PC-3 (cell line): ENCODE measurements at regions of chr3 and their contacts with region 1.

Region 1: GRCh38 chr3:54120657-54121413 is 1.5 kb upstream of the CACNA2D3 start:
- DNase-seq: no peak
- ATAC-seq: no peak
- H3K4me3 ChIP-seq: no peak overlapping the region
- H3K27ac ChIP-seq: no peak overlapping the region
- H3K4me1 ChIP-seq: no peaks in the 10 kb centered on the region
- H3K27me3 ChIP-seq: peaks cover 61% of the 10 kb centered on the region
- CTCF ChIP-seq: no peak

Region 2: DNA sequence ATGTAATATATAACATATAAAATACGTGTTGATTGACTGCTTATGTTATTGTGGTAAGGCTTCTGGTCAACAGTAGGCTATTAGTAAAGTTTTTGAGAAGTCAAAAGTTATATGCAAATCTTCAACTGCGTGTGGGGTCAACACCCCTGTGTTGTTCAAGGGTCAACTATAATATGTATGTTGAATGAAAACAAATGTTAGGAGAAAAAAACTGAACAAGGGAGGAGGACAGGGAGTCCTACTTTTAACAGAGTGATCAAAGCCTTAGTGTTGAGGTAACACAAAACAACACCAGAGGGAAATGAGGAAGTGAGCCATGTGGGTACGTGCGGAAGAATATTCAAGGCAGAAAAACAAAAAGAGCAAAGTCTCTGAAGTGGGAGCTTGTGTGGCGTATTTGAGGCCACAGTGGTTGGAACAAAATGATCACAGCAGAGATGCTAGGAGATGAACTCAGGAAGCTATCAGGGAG is 1137.5 kb before region 1 on chr3:
- CTCF ChIA-PET with region 1: no interaction called
- POLR2A ChIA-PET with region 1: interaction called, 13 read pairs
- intact Hi-C with region 1: no loop called
- DNase-seq: no peak
- ATAC-seq: no peak
- H3K4me3 ChIP-seq: no peak overlapping the region
- H3K27ac ChIP-seq: no peak overlapping the region
- H3K4me1 ChIP-seq: no peaks in the 10 kb centered on the region
- H3K27me3 ChIP-seq: no peaks in the 10 kb centered on the region
- CTCF ChIP-seq: no peak

Region 3: GRCh38 chr3:54071601-54072000 is 49.2 kb before region 1 on chr3:
- CTCF ChIA-PET with region 1: no interaction called
- POLR2A ChIA-PET with region 1: no interaction called
- intact Hi-C with region 1: no loop called
- DNase-seq: no peak
- ATAC-seq: no peak
- H3K4me3 ChIP-seq: no peak overlapping the region
- H3K27ac ChIP-seq: no peak overlapping the region
- H3K4me1 ChIP-seq: no peaks in the 10 kb centered on the region
- H3K27me3 ChIP-seq: peaks cover 33% of the 10 kb centered on the region
- CTCF ChIP-seq: no peak

Region 4: GRCh38 chr3:54083901-54084300 is 36.9 kb before region 1 on chr3:
- CTCF ChIA-PET with region 1: no interaction called
- POLR2A ChIA-PET with region 1: no interaction called
- intact Hi-C with region 1: no loop called
- DNase-seq: no peak
- ATAC-seq: no peak
- H3K4me3 ChIP-seq: no peak overlapping the region
- H3K27ac ChIP-seq: no peak overlapping the region
- H3K4me1 ChIP-seq: no peaks in the 10 kb centered on the region
- H3K27me3 ChIP-seq: peaks cover 26% of the 10 kb centered on the region
- CTCF ChIP-seq: no peak